ENCODE measurements at regions of chr20 and their contacts with region 1.

Region 1: GRCh38 chr20:44080646-44081267 is 106.2 kb downstream of the JPH2 start:
- DNase-seq: peak; percentile 55
- ATAC-seq: peak; percentile 93
- H3K4me3 ChIP-seq: no peak overlapping the region
- H3K27ac ChIP-seq: no peak overlapping the region
- H3K4me1 ChIP-seq: 0 out of 2 replicates have a peak, but pooled peaks cover 4% of the 10 kb centered on the region
- H3K27me3 ChIP-seq: no peaks in the 10 kb centered on the region
- CTCF ChIP-seq: peak; percentile 93 to 99 (median 99); a peak in 5 of 6 replicates
- EP300 ChIP-seq: no peak
- POLR2A ChIP-seq: no peak
- RAD21 ChIP-seq: peak; percentile 100

Region 2: GRCh38 chr20:43681468-43681942 is 399.3 kb before region 1 on chr20:
- CTCF ChIA-PET with region 1: interaction called, 5 read pairs
- POLR2A ChIA-PET with region 1: no interaction called
- RAD21 ChIA-PET with region 1: interaction called, 3 read pairs
- SMC1A ChIA-PET with region 1: interaction called, 3 read pairs
- in situ Hi-C with region 1: no loop called
- intact Hi-C with region 1: loop called (anchors 5 kb)
- DNase-seq: peak; percentile 21
- ATAC-seq: peak; percentile 70
- H3K4me3 ChIP-seq: peak overlapping the region; percentile 68
- H3K27ac ChIP-seq: peak overlapping the region; percentile 89
- H3K4me1 ChIP-seq: peaks cover 32% of the 10 kb centered on the region
- H3K27me3 ChIP-seq: no peaks in the 10 kb centered on the region
- CTCF ChIP-seq: peak; percentile 21 to 42 (median 40); a peak in 5 of 6 replicates
- EP300 ChIP-seq: no peak
- POLR2A ChIP-seq: 0 out of 2 replicates have a peak, but pooled peaks have one; percentile 23
- RAD21 ChIP-seq: 0 out of 2 replicates have a peak, but pooled peaks have one; percentile 14

Region 3: GRCh38 chr20:43893930-43894329 is 186.8 kb before region 1 on chr20:
- CTCF ChIA-PET with region 1: no interaction called
- POLR2A ChIA-PET with region 1: no interaction called
- RAD21 ChIA-PET with region 1: no interaction called
- SMC1A ChIA-PET with region 1: no interaction called
- in situ Hi-C with region 1: no loop called
- intact Hi-C with region 1: no loop called
- DNase-seq: no peak
- ATAC-seq: no peak
- H3K4me3 ChIP-seq: no peak overlapping the region
- H3K27ac ChIP-seq: no peak overlapping the region
- H3K4me1 ChIP-seq: no peaks in the 10 kb centered on the region
- H3K27me3 ChIP-seq: no peaks in the 10 kb centered on the region
- CTCF ChIP-seq: no peak
- EP300 ChIP-seq: no peak
- POLR2A ChIP-seq: no peak
- RAD21 ChIP-seq: no peak

Region 4: GRCh38 chr20:43914311-43915210 is 166.2 kb before region 1 on chr20 and contains the start of gene TOX2:
- CTCF ChIA-PET with region 1: interaction called, 13 read pairs
- POLR2A ChIA-PET with region 1: no interaction called
- RAD21 ChIA-PET with region 1: interaction called, 3 read pairs
- SMC1A ChIA-PET with region 1: interaction called, 3 read pairs
- in situ Hi-C with region 1: no loop called
- intact Hi-C with region 1: loop called (anchors 5 kb)
- DNase-seq: no peak
- ATAC-seq: peak; percentile 43
- H3K4me3 ChIP-seq: peak within 1 kb of the TSS; percentile 68; the same call in 1 of the 2 replicates
- H3K27ac ChIP-seq: peak within 1 kb of the TSS; percentile 28; the same call in 1 of the 2 replicates
- H3K4me1 ChIP-seq: peaks cover 18% of the 10 kb centered on the region
- H3K27me3 ChIP-seq: peaks cover 0 to 4% of the 10 kb centered on the region in 2 experiments; a peak in 2 of 4 replicates
- CTCF ChIP-seq: no peak
- EP300 ChIP-seq: no peak
- POLR2A ChIP-seq: no peak; the same call in 1 of the 2 replicates
- RAD21 ChIP-seq: no peak
- polyA plus RNA-seq, gene TOX2: 2.6 to 6.2 TPM

Region 5: DNA sequence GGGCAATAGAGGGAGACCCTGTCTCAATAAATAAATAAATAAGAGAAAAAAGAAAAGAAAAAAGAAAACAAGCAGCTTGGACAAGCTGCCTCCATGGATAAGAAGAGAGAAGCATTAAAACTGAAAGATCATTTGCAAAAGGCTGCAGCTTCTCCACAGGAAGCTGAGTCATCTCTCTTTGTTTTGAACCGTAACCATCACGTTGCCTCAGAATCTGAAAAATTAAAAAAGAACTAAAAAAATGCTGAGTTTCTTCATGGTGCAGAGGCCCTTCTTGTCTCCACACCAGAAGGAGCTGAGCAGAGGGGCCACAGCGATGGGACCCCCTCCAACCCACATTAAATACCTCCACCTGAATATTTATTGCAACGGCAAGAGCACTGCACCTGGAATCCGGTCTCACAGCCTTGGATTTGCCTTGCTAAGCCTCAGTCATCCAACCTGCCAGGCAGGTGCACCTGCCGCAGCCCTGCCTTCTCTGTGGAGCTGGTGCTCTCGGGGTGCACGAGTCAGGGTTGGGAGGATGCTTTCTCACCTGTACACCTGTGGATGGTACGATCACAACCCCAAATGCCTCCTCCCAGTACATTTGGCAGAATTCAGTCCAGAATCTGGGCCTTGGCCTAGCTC is 138.0 kb before region 1 on chr20:
- CTCF ChIA-PET with region 1: interaction called, 5 read pairs
- POLR2A ChIA-PET with region 1: interaction called, 3 read pairs
- RAD21 ChIA-PET with region 1: interaction called, 4 read pairs
- SMC1A ChIA-PET with region 1: interaction called, 29 read pairs
- in situ Hi-C with region 1: no loop called
- intact Hi-C with region 1: no loop called
- DNase-seq: no peak
- ATAC-seq: peak; percentile 74
- H3K4me3 ChIP-seq: peak overlapping the region; percentile 50; the same call in 1 of the 2 replicates
- H3K27ac ChIP-seq: peak overlapping the region; percentile 84
- H3K4me1 ChIP-seq: peaks cover 19% of the 10 kb centered on the region
- H3K27me3 ChIP-seq: no peaks in the 10 kb centered on the region
- CTCF ChIP-seq: no peak
- EP300 ChIP-seq: peak in 1 of 2 experiments; percentile 41; a peak in 2 of 4 replicates
- POLR2A ChIP-seq: no peak
- RAD21 ChIP-seq: no peak

Region 6: DNA sequence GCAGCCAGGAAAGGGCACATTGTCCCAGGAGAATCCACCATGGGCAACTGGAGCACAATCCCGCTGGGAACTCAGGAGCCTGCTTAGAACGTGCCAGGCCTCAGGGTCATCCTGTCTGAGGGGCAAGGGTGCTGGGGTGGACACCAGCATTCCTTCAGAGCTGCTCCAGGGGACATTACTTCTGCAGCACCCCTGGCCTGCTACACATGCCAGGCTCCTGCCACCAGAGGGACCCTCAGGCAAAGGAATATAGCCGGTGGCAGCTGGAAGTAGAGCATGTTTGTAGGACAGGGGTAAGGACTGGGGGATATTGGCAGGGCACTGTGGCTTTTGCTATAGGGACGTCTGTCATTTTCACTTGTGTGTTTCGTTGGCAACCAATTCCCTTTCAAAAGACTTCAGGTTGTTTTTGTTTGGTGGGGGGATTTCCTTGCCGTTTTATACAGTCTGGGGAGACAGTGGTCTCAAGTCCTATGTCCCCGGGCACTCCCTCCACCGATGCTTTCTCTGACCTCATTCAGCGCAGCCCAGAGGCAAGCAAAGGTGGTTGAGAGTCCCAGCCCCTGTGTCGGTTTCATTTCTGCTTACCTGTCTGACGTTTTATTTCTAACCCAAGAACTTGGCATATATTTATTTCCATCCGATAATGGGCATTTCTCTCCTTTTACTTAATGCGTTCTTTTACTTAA is 24.6 kb before region 1 on chr20:
- CTCF ChIA-PET with region 1: interaction called, 7 read pairs
- POLR2A ChIA-PET with region 1: no interaction called
- RAD21 ChIA-PET with region 1: interaction called, 7 read pairs
- SMC1A ChIA-PET with region 1: interaction called, 34 read pairs
- in situ Hi-C with region 1: no loop called
- intact Hi-C with region 1: loop called (anchors 1 kb)
- DNase-seq: no peak
- ATAC-seq: peak; percentile 93
- H3K4me3 ChIP-seq: no peak overlapping the region
- H3K27ac ChIP-seq: no peak overlapping the region
- H3K4me1 ChIP-seq: no peaks in the 10 kb centered on the region
- H3K27me3 ChIP-seq: no peaks in the 10 kb centered on the region
- CTCF ChIP-seq: peak; percentile 38 to 53 (median 47); a peak in 4 of 6 replicates
- EP300 ChIP-seq: no peak
- POLR2A ChIP-seq: no peak
- RAD21 ChIP-seq: peak; percentile 72

Measured in GM12878 (cell line).